BJ (cell line): ENCODE measurements at regions of chr1 and their contacts with region 1.

Region 1: GRCh38 chr1:185813401-185813979 is 79.3 kb downstream of the HMCN1 start:
- DNase-seq: no peak
- H3K4me3 ChIP-seq: no peak overlapping the region
- H3K27me3 ChIP-seq: no peaks in the 10 kb centered on the region
- CTCF ChIP-seq: peak; percentile 69

Region 2: DNA sequence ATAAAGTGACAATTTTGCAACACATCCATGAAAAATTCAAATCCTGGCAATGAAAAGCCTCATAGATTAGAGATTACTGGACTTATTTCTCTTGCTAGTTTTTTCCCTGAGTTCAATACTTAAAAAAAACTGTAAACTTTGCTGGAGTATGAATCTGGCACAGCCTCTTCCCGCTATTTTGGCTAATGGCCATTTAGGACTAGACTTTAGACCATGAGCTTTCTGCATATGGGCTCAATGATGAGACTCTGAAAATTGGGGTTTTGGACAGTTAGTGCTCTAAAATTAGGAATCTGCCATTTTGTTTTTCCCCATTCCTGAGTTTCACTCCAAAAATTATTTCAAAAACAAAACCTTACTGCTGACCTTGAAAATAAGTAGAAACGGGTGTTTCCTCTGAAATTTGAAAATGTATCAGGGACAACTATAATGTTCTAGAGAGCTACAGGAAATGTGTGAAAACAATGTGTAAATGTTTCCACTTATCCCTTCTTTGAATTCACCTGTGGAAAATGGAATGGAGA is 58.2 kb after region 1 on chr1:
- CTCF ChIA-PET with region 1: no interaction called
- POLR2A ChIA-PET with region 1: no interaction called
- DNase-seq: no peak
- H3K4me3 ChIP-seq: no peak overlapping the region
- H3K27me3 ChIP-seq: no peaks in the 10 kb centered on the region
- CTCF ChIP-seq: no peak

Region 3: DNA sequence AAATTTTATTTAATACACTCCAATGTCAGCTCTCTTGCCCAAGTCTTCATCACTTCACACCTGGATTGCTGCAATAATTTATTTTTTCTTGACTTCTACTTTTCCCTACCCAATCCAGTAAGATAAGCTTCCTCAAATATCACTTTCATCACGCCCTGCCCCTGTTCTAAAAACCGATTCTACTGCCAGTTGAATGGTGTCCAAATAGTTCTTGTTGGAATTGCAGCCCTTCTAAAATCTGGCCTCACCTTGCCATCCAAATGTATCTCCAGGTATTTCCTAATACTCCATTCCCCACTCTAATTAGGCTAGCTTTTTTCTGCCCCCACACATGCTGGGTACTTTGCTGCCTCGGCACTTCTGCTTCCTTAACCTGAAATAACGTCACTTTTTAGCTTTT is 73.2 kb after region 1 on chr1:
- CTCF ChIA-PET with region 1: no interaction called
- POLR2A ChIA-PET with region 1: no interaction called
- DNase-seq: no peak
- H3K4me3 ChIP-seq: no peak overlapping the region
- H3K27me3 ChIP-seq: no peaks in the 10 kb centered on the region
- CTCF ChIP-seq: no peak

Region 4: DNA sequence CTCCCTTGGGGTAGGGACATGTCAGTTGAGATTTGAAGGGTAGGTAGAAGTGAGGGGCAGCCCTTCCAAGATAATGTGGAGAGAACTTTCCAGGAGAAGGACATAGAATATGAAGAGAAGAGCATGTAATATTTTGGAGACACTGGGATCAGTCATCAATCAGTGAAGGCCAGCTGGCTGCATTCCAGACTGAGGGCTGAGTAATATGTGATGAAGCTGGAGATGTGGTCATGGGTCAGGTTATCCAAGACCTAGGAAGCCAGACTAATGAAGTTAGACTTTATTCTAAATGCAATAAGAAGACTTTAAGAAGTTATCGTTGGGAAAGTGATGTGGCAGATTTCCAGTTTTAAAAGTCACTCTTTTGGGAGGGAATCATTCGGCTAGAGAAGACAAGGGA is 182.7 kb after region 1 on chr1:
- CTCF ChIA-PET with region 1: no interaction called
- POLR2A ChIA-PET with region 1: interaction called, 16 read pairs
- DNase-seq: no peak
- H3K4me3 ChIP-seq: no peak overlapping the region
- H3K27me3 ChIP-seq: no peaks in the 10 kb centered on the region
- CTCF ChIP-seq: no peak